Panc1 (cell line): ENCODE measurements at regions of chr1 and their contacts with region 1.

Region 1: GRCh38 chr1:86409416-86410021 is 13.4 kb upstream of the ODF2L start:
- DNase-seq: no peak
- ATAC-seq: no peak
- H3K4me3 ChIP-seq: no peak overlapping the region
- H3K27ac ChIP-seq: no peak overlapping the region
- H3K4me1 ChIP-seq: no peaks in the 10 kb centered on the region
- H3K27me3 ChIP-seq: peaks cover 18% of the 10 kb centered on the region; the same call in 1 of the 2 replicates
- CTCF ChIP-seq: no peak

Region 2: GRCh38 chr1:86436041-86436440 is 26.5 kb after region 1 on chr1:
- CTCF ChIA-PET with region 1: no interaction called
- POLR2A ChIA-PET with region 1: no interaction called
- in situ Hi-C with region 1: no loop called
- intact Hi-C with region 1: no loop called
- DNase-seq: no peak
- ATAC-seq: no peak
- H3K4me3 ChIP-seq: no peak overlapping the region
- H3K27ac ChIP-seq: no peak overlapping the region
- H3K4me1 ChIP-seq: no peaks in the 10 kb centered on the region
- H3K27me3 ChIP-seq: peaks cover 56% of the 10 kb centered on the region
- CTCF ChIP-seq: no peak

Region 3: GRCh38 chr1:86447198-86447790 is 37.8 kb after region 1 on chr1:
- CTCF ChIA-PET with region 1: no interaction called
- POLR2A ChIA-PET with region 1: interaction called, 11 read pairs
- in situ Hi-C with region 1: no loop called
- intact Hi-C with region 1: no loop called
- DNase-seq: no peak
- ATAC-seq: no peak
- H3K4me3 ChIP-seq: no peak overlapping the region
- H3K27ac ChIP-seq: no peak overlapping the region
- H3K4me1 ChIP-seq: no peaks in the 10 kb centered on the region
- H3K27me3 ChIP-seq: peaks cover 6% of the 10 kb centered on the region; the same call in 1 of the 2 replicates
- CTCF ChIP-seq: no peak